Mammary epithelial cell (primary cell): ENCODE measurements at regions of chr1 and their contacts with region 1.

Region 1: DNA sequence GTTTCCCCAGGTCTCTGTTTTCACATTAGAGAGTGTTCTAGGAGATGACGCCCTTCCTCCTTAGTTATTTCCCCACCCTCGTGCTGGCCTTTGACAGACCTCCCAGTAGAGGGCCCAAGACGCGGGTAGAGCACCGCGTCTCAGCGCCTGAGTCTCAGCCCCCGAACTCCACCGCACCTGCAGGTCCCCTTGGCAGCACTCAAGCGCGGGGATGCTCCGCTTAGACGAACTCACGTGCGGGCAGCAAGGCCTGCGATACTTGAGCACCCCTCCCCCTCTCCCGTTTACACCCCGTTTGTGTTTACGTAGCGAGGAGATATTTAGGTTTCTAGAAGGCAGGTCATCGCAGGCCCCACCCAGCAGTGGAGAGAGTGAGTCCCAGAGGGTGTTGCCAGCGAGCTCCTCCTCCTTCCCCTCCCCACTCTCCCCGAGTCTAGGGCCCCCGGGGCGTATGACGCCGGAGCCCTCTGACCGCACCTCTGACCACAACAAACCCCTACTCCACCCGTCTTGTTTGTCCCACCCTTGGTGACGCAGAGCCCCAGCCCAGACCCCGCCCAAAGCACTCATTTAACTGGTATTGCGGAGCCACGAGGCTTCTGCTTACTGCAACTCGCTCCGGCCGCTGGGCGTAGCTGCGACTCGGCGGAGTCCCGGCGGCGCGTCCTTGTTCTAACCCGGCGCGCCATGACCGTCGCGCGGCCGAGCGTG is at the start of gene CD55:
- DNase-seq: peak; percentile 100
- H3K4me3 ChIP-seq: peak within 1 kb of the TSS; percentile 76 to 91 (median 78)
- H3K27ac ChIP-seq: peak within 1 kb of the TSS; percentile 94
- H3K4me1 ChIP-seq: peaks cover 18% of the 10 kb centered on the region
- H3K27me3 ChIP-seq: no peaks in the 10 kb centered on the region
- CTCF ChIP-seq: peak; percentile 6 to 28
- total RNA-seq, gene CD55: 35.2 to 40.5 TPM

Region 2: DNA sequence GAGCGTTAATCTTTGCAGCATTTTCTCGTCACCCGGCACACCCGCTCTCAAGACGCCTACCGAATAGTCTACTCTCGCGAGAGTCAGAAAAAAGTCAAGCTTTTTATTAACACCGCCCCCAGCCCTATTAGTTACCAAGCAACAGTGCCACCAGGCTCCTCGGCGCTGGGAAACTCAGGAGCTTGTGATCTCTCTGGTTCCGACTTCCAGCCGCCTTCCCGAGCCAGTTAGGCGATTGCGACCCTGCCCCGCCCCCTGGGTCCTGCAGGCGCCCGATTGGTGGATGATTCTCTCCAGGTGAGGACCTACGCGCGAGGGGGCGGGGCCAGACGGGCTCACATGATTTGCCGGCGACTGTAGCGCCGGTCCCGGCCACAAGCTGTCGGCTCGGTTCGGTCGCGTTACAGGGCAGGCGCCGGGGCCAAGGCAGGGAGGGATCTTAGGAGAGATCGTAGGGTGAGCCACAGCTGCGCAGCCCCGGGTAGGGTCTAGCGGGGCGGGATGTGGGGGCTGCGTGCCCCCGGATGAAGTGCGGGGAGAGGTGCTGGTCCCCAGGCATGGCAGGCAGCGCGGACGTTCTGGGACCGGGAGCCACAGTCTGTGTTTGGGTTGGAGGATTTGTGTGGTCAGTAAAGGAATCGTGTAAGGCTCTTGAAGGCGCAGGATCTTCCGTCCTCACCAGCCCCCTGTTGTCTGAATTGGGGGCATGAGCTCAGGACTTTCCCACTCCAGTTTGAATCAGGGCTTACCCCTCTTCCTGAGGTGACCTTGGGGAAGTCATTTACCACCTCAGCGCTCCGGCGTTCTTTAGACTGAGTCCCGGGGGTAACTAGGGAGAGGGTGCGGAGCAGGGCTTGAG is 268.1 kb before region 1 on chr1 and contains the start of gene PFKFB2:
- CTCF ChIA-PET with region 1: interaction called, 4 read pairs
- dilution Hi-C with region 1: no loop called
- in situ Hi-C with region 1: no loop called
- intact Hi-C with region 1: loop called (anchors 10 kb)
- DNase-seq: peak; percentile 99
- H3K4me3 ChIP-seq: peak within 1 kb of the TSS; percentile 77 to 91 (median 80)
- H3K27ac ChIP-seq: peak within 1 kb of the TSS; percentile 95
- H3K4me1 ChIP-seq: peaks cover 34% of the 10 kb centered on the region
- H3K27me3 ChIP-seq: no peaks in the 10 kb centered on the region
- CTCF ChIP-seq: peak in 1 of 2 donors; percentile 29
- total RNA-seq, gene PFKFB2: 34.4 to 38.7 TPM

Region 3: DNA sequence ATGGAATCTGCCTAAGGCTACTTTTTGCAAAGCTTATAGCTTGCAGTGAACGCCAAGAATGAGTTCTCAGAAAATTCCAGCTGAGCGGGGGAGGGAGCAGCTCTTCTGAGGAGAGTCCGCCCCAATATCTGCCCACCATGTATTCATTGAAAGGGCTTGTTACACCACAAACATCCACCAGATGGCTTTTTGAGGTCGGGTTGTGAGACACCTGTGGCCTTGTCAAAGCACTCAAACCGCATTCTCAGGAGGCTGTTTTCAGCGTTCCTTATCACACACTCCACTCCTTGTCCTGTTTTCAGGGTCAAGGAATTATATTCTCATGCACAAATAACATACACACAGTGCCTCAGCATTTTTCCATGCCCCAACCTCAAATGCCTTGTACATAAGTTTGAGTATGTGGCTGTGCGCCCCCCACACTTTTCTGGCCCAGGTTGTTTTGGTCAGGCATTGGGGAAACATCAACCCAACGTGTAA is 236.5 kb before region 1 on chr1:
- CTCF ChIA-PET with region 1: no interaction called
- dilution Hi-C with region 1: no loop called
- in situ Hi-C with region 1: no loop called
- intact Hi-C with region 1: loop called (anchors 5 kb)
- DNase-seq: peak; percentile 59
- H3K4me3 ChIP-seq: no peak overlapping the region
- H3K27ac ChIP-seq: no peak overlapping the region
- H3K4me1 ChIP-seq: peaks cover 3% of the 10 kb centered on the region
- H3K27me3 ChIP-seq: no peaks in the 10 kb centered on the region
- CTCF ChIP-seq: peak; percentile 56 to 73

Region 4: GRCh38 chr1:207181838-207182237 is 139.4 kb before region 1 on chr1:
- CTCF ChIA-PET with region 1: interaction called, 4 read pairs
- dilution Hi-C with region 1: no loop called
- in situ Hi-C with region 1: loop called in 1 of 2 experiments (anchors 10 kb)
- intact Hi-C with region 1: loop called (anchors 2 kb)
- DNase-seq: peak; percentile 44
- H3K4me3 ChIP-seq: no peak overlapping the region
- H3K27ac ChIP-seq: no peak overlapping the region
- H3K4me1 ChIP-seq: no peaks in the 10 kb centered on the region
- H3K27me3 ChIP-seq: peaks cover 4% of the 10 kb centered on the region
- CTCF ChIP-seq: peak; percentile 41 to 71

Region 5: DNA sequence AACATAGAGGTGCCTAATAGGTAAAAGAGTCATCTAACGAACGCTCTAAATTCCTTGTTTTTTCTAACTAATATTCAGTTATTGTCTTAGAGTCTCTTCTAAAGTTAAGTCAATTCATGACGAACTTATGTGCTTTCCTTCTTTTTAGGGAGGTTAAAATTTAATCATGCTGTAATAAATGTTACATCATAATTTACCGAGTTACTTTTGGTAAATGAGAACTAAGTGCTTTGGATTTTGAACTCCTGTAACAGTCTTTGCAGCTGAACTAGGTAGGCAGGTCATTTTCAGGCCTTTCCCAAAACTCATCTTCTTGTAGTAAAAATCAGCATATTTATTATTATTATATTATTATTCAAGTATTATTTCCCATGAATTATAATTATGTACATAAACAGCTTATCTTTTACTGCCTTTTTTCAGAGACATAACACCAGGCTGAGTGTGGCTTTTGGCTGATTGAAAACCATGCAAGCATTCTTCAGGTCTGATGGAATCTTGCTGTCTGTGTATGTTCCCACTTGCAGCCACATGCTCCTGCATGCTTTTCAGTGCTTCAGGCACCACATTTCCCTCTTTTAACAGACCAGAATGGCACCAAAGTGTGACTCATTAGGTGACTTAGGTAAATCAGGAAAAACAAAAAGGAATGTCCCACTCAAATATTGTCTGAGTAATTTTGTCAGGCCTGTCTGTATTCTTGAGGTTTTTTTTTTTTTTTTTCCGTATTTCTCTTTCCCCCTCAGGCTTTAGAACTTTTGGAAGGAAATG is 80.7 kb before region 1 on chr1:
- CTCF ChIA-PET with region 1: no interaction called
- dilution Hi-C with region 1: no loop called
- in situ Hi-C with region 1: no loop called
- intact Hi-C with region 1: loop called (anchors 1 kb)
- DNase-seq: peak; percentile 98
- H3K4me3 ChIP-seq: peak overlapping the region in 1 of 3 experiments; percentile 0
- H3K27ac ChIP-seq: peak overlapping the region; percentile 87
- H3K4me1 ChIP-seq: peaks cover 23% of the 10 kb centered on the region
- H3K27me3 ChIP-seq: no peaks in the 10 kb centered on the region
- CTCF ChIP-seq: no peak

Region 6: DNA sequence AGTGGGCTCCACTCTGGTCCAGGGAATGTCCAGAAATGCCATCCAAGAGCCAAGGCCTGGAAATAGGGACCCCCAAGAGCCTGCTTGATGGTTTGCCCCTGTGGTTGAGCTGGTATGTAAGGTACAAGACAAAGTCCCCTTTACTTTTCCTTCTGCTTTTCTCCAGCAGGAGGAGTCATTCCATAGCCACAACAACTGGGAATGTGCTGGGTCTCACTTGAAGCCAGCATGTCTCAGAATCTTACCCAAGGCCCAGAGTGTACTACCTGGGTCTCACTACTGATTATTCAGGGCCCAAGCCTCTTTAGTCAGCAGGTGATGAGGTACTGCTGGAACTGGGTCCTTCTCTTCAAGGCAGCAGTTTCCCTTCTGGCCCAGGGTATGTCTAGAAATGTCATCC is 61.8 kb before region 1 on chr1:
- CTCF ChIA-PET with region 1: no interaction called
- dilution Hi-C with region 1: no loop called
- in situ Hi-C with region 1: no loop called
- intact Hi-C with region 1: loop called (anchors 1 kb)
- DNase-seq: peak; percentile 29
- H3K4me3 ChIP-seq: no peak overlapping the region
- H3K27ac ChIP-seq: no peak overlapping the region
- H3K4me1 ChIP-seq: peaks cover 4% of the 10 kb centered on the region
- H3K27me3 ChIP-seq: no peaks in the 10 kb centered on the region
- CTCF ChIP-seq: peak; percentile 41 to 53

Region 7: GRCh38 chr1:207300970-207301369 is 20.3 kb before region 1 on chr1:
- CTCF ChIA-PET with region 1: no interaction called
- dilution Hi-C with region 1: no loop called
- in situ Hi-C with region 1: no loop called
- intact Hi-C with region 1: no loop called
- DNase-seq: no peak
- H3K4me3 ChIP-seq: no peak overlapping the region
- H3K27ac ChIP-seq: no peak overlapping the region
- H3K4me1 ChIP-seq: peaks cover 5% of the 10 kb centered on the region
- H3K27me3 ChIP-seq: no peaks in the 10 kb centered on the region
- CTCF ChIP-seq: no peak

Region 8: GRCh38 chr1:207393610-207394009 is 72.4 kb after region 1 on chr1:
- CTCF ChIA-PET with region 1: interaction called, 6 read pairs
- dilution Hi-C with region 1: no loop called
- in situ Hi-C with region 1: no loop called
- intact Hi-C with region 1: loop called (anchors 1 kb)
- DNase-seq: peak; percentile 96
- H3K4me3 ChIP-seq: no peak overlapping the region
- H3K27ac ChIP-seq: peak overlapping the region; percentile 61
- H3K4me1 ChIP-seq: peaks cover 18% of the 10 kb centered on the region
- H3K27me3 ChIP-seq: no peaks in the 10 kb centered on the region
- CTCF ChIP-seq: no peak